Transverse colon (tissue), 4 donors: ENCODE measurements at regions of chr11 and their contacts with region 1.

Region 1: GRCh38 chr11:111344032-111344431 is 35.0 kb downstream of the POU2AF1 start:
- DNase-seq: peak; percentile 51
- H3K4me3 ChIP-seq: no peak overlapping the region
- H3K27ac ChIP-seq: peak overlapping the region in 1 of 4 donors; percentile 16
- H3K4me1 ChIP-seq: no peaks in the 10 kb centered on the region
- H3K27me3 ChIP-seq: no peaks in the 10 kb centered on the region
- CTCF ChIP-seq: no peak
- EP300 ChIP-seq: no peak
- POLR2A ChIP-seq: no peak

Region 2: GRCh38 chr11:111299101-111300026 is 44.7 kb before region 1 on chr11:
- in situ Hi-C with region 1: no loop called
- intact Hi-C with region 1: loop called (anchors 1 kb)
- DNase-seq: peak; percentile 73
- H3K4me3 ChIP-seq: peak overlapping the region; percentile 61 to 72 (median 66)
- H3K27ac ChIP-seq: peak overlapping the region; percentile 86 to 91 (median 89)
- H3K4me1 ChIP-seq: peaks cover 15 to 42% (median 31%) of the 10 kb centered on the region in 4 donors
- H3K27me3 ChIP-seq: no peaks in the 10 kb centered on the region
- CTCF ChIP-seq: peak; percentile 52 to 81 (median 59)
- EP300 ChIP-seq: no peak
- POLR2A ChIP-seq: peak; percentile 67